CD14-positive monocyte (primary cell): ENCODE measurements at regions of chr15 and their contacts with region 1.

Region 1: GRCh38 chr15:68924866-68925560 is 5.3 kb upstream of the SPESP1 start:
- DNase-seq: peak; percentile 23 to 47 (median 30)
- H3K4me3 ChIP-seq: no peak overlapping the region
- H3K4me3 Mint-ChIP-seq: no peak overlapping the region
- H3K27ac ChIP-seq: no peak overlapping the region
- H3K27ac Mint-ChIP-seq: peak overlapping the region in 1 of 7 donors; percentile 26
- H3K4me1 ChIP-seq: no peaks in the 10 kb centered on the region
- H3K4me1 Mint-ChIP-seq: peaks cover 6% of the 10 kb centered on the region
- H3K27me3 ChIP-seq: no peaks in the 10 kb centered on the region
- H3K27me3 Mint-ChIP-seq: peaks cover 0 to 4% (median 3%) of the 10 kb centered on the region in 3 donors
- CTCF ChIP-seq: peak; percentile 78

Region 2: GRCh38 chr15:68550481-68551295 is 374.3 kb before region 1 on chr15:
- intact Hi-C with region 1: loop called (anchors 5 kb)
- DNase-seq: peak; percentile 32 to 55 (median 53)
- H3K4me3 ChIP-seq: no peak overlapping the region
- H3K4me3 Mint-ChIP-seq: no peak overlapping the region
- H3K27ac ChIP-seq: no peak overlapping the region
- H3K27ac Mint-ChIP-seq: no peak overlapping the region
- H3K4me1 ChIP-seq: no peaks in the 10 kb centered on the region
- H3K4me1 Mint-ChIP-seq: no peaks in the 10 kb centered on the region
- H3K27me3 ChIP-seq: no peaks in the 10 kb centered on the region
- H3K27me3 Mint-ChIP-seq: peaks cover 10 to 13% (median 12%) of the 10 kb centered on the region in 3 donors
- CTCF ChIP-seq: peak; percentile 96

Region 3: GRCh38 chr15:69237718-69238117 is 312.7 kb after region 1 on chr15:
- intact Hi-C with region 1: no loop called
- DNase-seq: no peak
- H3K4me3 ChIP-seq: no peak overlapping the region
- H3K4me3 Mint-ChIP-seq: no peak overlapping the region
- H3K27ac ChIP-seq: no peak overlapping the region
- H3K27ac Mint-ChIP-seq: no peak overlapping the region
- H3K4me1 ChIP-seq: no peaks in the 10 kb centered on the region
- H3K4me1 Mint-ChIP-seq: no peaks in the 10 kb centered on the region
- H3K27me3 ChIP-seq: no peaks in the 10 kb centered on the region
- H3K27me3 Mint-ChIP-seq: peaks cover 0 to 2% (median 0%) of the 10 kb centered on the region in 3 donors
- CTCF ChIP-seq: no peak